ENCODE measurements at regions of chr5 and their contacts with region 1.

Region 1: DNA sequence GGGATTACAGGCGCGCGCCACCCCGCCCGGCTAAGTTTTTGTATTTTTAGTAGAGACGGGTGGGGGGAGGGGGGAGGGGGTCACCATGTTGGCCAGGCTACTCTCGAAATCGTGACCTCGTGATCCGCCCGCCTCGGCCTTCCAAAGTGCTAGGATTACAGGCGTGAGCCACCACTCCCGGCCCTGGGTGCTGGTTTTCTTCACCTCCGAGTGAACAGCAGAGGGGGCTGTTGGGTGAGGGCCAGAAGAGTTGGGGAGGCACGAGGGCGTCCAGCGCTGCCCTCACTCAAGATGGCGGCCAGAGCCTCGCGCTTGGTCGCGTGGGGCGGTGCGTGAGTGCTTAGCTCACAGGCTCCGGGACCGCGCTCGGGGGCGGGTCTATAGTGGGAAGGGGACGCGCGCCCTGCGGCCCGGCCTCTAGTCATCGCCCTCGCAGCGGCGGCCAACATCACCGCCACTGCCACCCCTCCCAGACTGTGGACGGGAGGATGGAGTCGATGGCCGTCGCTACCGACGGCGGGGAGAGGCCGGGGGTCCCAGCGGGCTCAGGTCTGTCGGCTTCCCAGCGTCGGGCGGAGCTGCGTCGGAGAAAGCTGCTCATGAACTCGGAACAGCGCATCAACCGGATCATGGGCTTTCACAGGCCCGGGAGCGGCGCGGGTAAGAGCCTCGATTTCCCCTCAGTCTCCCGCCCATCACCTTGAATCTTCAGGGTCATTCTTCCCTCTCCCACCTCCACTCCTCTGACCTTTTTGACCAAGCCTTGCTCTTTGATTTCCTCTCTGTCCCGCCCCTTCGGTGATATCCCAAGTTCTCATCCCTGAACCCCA is at the start of gene CAMLG:
- DNase-seq: peak; percentile 98
- H3K4me3 ChIP-seq: peak within 1 kb of the TSS; percentile 84
- H3K27ac ChIP-seq: peak within 1 kb of the TSS; percentile 42
- H3K4me1 ChIP-seq: peaks cover 36% of the 10 kb centered on the region
- CTCF ChIP-seq: peak; percentile 79
- total RNA-seq, gene CAMLG: 27.3 and 28.5 TPM in 2 replicates

Region 2: GRCh38 chr5:134370871-134371833 is 367.2 kb before region 1 on chr5 and contains the start of gene UBE2B:
- CTCF ChIA-PET with region 1: no interaction called
- POLR2A ChIA-PET with region 1: interaction called, 3 read pairs
- intact Hi-C with region 1: loop called (anchors 5 kb)
- DNase-seq: peak; percentile 100
- H3K4me3 ChIP-seq: peak within 1 kb of the TSS; percentile 80
- H3K27ac ChIP-seq: peak within 1 kb of the TSS; percentile 62
- H3K4me1 ChIP-seq: peaks cover 25% of the 10 kb centered on the region
- CTCF ChIP-seq: no peak
- total RNA-seq, gene UBE2B: 7.6 and 26.4 TPM in 2 replicates

Region 3: GRCh38 chr5:134527146-134527960 is 211.0 kb before region 1 on chr5:
- CTCF ChIA-PET with region 1: interaction called, 3 read pairs
- POLR2A ChIA-PET with region 1: no interaction called
- intact Hi-C with region 1: loop called (anchors 2 kb)
- DNase-seq: peak; percentile 88
- H3K4me3 ChIP-seq: peak overlapping the region; percentile 77
- H3K27ac ChIP-seq: peak overlapping the region; percentile 88
- H3K4me1 ChIP-seq: peaks cover 30% of the 10 kb centered on the region
- CTCF ChIP-seq: peak; percentile 82

Region 4: GRCh38 chr5:134637161-134637582 is 101.2 kb before region 1 on chr5:
- CTCF ChIA-PET with region 1: interaction called, 3 read pairs
- POLR2A ChIA-PET with region 1: interaction called, 3 read pairs
- intact Hi-C with region 1: loop called (anchors 2 kb)
- DNase-seq: no peak
- H3K4me3 ChIP-seq: no peak overlapping the region
- H3K27ac ChIP-seq: no peak overlapping the region
- H3K4me1 ChIP-seq: no peaks in the 10 kb centered on the region
- CTCF ChIP-seq: no peak

Region 5: GRCh38 chr5:134845852-134846640 is 107.7 kb after region 1 on chr5 and contains the start of gene C5orf24:
- CTCF ChIA-PET with region 1: no interaction called
- POLR2A ChIA-PET with region 1: interaction called, 11 read pairs
- intact Hi-C with region 1: loop called (anchors 2 kb)
- DNase-seq: peak; percentile 96
- H3K4me3 ChIP-seq: peak within 1 kb of the TSS; percentile 79
- H3K27ac ChIP-seq: peak within 1 kb of the TSS; percentile 80
- H3K4me1 ChIP-seq: peaks cover 16% of the 10 kb centered on the region
- CTCF ChIP-seq: 0 out of 2 replicates have a peak, but pooled peaks have one; percentile 8
- total RNA-seq, gene C5orf24: 28.4 and 36.7 TPM in 2 replicates

Region 6: GRCh38 chr5:134873987-134874830 is 135.9 kb after region 1 on chr5 and contains the start of gene TXNDC15:
- CTCF ChIA-PET with region 1: no interaction called
- POLR2A ChIA-PET with region 1: interaction called, 3 read pairs
- intact Hi-C with region 1: loop called (anchors 1 kb)
- DNase-seq: peak; percentile 88
- H3K4me3 ChIP-seq: peak within 1 kb of the TSS; percentile 78
- H3K27ac ChIP-seq: peak within 1 kb of the TSS; percentile 54
- H3K4me1 ChIP-seq: peaks cover 38% of the 10 kb centered on the region
- CTCF ChIP-seq: no peak
- total RNA-seq, gene TXNDC15: 20.6 and 43.5 TPM in 2 replicates

Region 7: GRCh38 chr5:135191084-135191826 is 452.9 kb after region 1 on chr5:
- CTCF ChIA-PET with region 1: no interaction called
- POLR2A ChIA-PET with region 1: no interaction called
- intact Hi-C with region 1: loop called (anchors 10 kb)
- DNase-seq: peak; percentile 87
- H3K4me3 ChIP-seq: peak overlapping the region; percentile 61
- H3K27ac ChIP-seq: no peak overlapping the region
- H3K4me1 ChIP-seq: peaks cover 8% of the 10 kb centered on the region
- CTCF ChIP-seq: peak; percentile 90